ENCODE measurements at regions of chr2 and their contacts with region 1.

Region 1: DNA sequence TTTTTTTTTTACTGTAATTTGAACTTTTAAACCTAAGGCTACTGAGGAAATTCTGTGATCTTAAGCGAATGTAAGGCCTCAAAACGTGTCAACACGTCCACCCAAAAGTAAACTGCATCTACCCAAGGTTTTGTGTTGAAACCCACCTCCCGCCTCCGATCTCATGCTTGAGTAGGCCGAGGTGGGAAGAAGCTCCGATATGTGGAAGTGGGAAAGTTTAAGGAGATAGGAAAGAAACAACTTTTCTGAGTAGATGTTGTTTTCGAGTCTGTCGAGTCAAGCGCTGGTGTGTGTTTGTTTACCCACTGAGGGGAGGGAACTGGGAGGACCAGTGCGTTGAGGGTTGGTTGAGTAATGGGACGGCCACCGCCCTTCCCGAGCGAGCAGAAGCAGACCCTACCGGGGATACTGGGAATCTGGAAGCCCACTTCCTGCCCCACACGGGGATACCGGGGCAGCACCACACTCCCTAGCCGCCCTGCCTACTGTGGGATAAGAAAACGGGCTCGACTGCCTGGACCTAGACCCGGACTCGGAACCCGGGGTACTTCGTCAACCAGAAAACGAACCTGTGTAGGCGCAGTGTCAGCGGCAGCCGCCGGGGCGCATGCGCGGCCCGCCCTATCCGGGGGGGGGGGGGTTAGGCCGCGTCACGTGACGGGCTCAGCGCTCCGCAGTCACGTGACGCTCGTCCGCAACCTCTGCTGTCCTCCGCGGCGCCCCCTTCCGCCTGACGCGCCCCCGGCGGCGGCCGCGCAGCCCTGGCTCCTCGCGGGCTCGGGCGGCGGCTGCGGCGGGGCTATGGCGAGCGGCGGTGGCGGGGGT is at the start of gene RETREG2:
- DNase-seq: peak; percentile 89
- H3K4me3 ChIP-seq: peak within 1 kb of the TSS; percentile 96
- H3K27ac ChIP-seq: peak within 1 kb of the TSS; percentile 81
- H3K4me1 ChIP-seq: peaks cover 5% of the 10 kb centered on the region
- H3K27me3 ChIP-seq: no peaks in the 10 kb centered on the region
- CTCF ChIP-seq: 0 out of 2 replicates have a peak, but pooled peaks have one; percentile 31
- total RNA-seq, gene RETREG2: 53.1 and 59.0 TPM in 2 replicates

Region 2: GRCh38 chr2:218607436-218608115 is 570.2 kb before region 1 on chr2 and contains the start of gene PLCD4:
- CTCF ChIA-PET with region 1: no interaction called
- POLR2A ChIA-PET with region 1: interaction called, 12 read pairs
- intact Hi-C with region 1: no loop called
- DNase-seq: no peak
- H3K4me3 ChIP-seq: no peak within 1 kb of the TSS
- H3K27ac ChIP-seq: no peak within 1 kb of the TSS
- H3K4me1 ChIP-seq: peaks cover 9% of the 10 kb centered on the region
- H3K27me3 ChIP-seq: no peaks in the 10 kb centered on the region
- CTCF ChIP-seq: no peak
- total RNA-seq, gene PLCD4: 0.24 and 0.39 TPM in 2 replicates

Region 3: GRCh38 chr2:218959141-218959731 is 218.5 kb before region 1 on chr2 and contains the start of gene CDK5R2:
- CTCF ChIA-PET with region 1: no interaction called
- POLR2A ChIA-PET with region 1: no interaction called
- intact Hi-C with region 1: no loop called
- DNase-seq: peak; percentile 95
- H3K4me3 ChIP-seq: peak within 1 kb of the TSS; percentile 53
- H3K27ac ChIP-seq: no peak within 1 kb of the TSS
- H3K4me1 ChIP-seq: peaks cover 24% of the 10 kb centered on the region
- H3K27me3 ChIP-seq: peaks cover 29% of the 10 kb centered on the region
- CTCF ChIP-seq: no peak
- total RNA-seq, gene CDK5R2: 0.37 and 0.44 TPM in 2 replicates

Region 4: DNA sequence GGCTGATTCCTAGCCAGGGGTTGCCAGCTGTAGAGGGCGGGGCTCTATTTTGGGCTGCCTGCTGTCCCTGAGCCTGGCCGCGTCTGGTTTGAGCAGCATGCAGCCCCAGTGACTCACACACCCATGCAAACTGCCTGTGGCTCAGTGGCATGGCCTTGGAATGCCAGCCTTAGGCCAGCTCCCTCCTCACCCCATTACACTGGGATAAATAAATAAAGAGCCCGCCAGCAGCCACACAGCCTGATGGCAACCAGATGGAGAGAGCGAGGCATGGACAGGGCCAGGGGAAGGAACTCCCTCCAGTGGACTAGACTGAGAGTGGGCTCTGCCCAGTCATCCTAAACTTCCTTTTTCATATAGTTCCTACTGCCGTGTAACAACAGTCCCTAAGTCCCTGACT is 35.4 kb before region 1 on chr2:
- CTCF ChIA-PET with region 1: no interaction called
- POLR2A ChIA-PET with region 1: interaction called, 13 read pairs
- intact Hi-C with region 1: no loop called
- DNase-seq: no peak
- H3K4me3 ChIP-seq: no peak overlapping the region
- H3K27ac ChIP-seq: no peak overlapping the region
- H3K4me1 ChIP-seq: no peaks in the 10 kb centered on the region
- H3K27me3 ChIP-seq: no peaks in the 10 kb centered on the region
- CTCF ChIP-seq: no peak

Region 5: DNA sequence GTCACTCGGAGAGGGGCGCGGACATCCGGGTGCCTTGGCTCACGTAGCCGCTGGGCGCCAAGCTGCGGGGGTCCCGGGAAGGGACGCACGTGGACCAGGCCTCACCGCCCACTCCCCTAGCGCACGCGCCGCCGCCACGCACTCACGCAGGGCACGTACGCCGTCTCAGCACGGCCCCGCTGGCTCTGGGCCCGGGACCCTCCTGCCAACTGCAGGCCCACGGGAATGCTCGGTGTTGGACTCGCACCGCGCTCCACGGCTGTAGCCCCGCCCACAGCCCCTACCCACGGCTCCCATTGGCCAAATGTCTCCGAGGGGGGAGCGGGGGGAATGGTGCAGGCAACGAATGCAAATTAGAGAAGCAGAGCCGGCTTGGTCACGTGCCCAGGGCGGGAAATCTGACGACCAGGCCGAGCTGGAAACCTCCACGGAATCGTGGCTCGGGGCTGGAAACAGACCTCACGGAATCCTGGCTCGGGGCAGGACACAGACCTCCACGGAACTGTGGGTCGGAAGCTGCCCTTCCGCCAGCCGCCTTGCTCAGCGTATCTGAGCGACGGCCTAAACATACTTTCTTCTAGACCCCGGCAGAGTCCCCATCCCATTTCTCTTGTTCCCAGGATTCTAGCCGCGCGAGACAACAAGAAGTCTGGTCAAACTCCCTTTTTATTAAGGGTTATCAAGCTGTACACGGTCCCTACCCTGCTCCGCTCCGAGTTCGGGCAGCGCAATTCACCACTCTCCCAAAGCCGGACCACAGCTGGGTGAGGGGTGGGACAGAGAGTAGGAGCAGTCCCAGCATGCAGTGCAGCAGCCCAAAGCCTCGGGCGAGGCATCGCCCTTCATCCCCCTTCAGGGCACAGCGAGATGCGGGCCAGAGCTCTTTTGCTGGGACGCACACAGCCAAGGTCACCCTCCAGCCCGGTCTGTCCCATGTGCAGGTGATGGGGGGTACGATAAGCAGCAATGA is 41.3 kb after region 1 on chr2 and contains the start of gene ABCB6:
- CTCF ChIA-PET with region 1: no interaction called
- POLR2A ChIA-PET with region 1: no interaction called
- intact Hi-C with region 1: loop called (anchors 5 kb)
- DNase-seq: peak; percentile 99
- H3K4me3 ChIP-seq: peak within 1 kb of the TSS; percentile 66
- H3K27ac ChIP-seq: peak within 1 kb of the TSS; percentile 91
- H3K4me1 ChIP-seq: peaks cover 23% of the 10 kb centered on the region
- H3K27me3 ChIP-seq: no peaks in the 10 kb centered on the region
- CTCF ChIP-seq: no peak
- total RNA-seq, gene ABCB6: 87.7 and 101 TPM in 2 replicates

Region 6: GRCh38 chr2:219362524-219363164 is 184.9 kb after region 1 on chr2:
- CTCF ChIA-PET with region 1: no interaction called
- POLR2A ChIA-PET with region 1: no interaction called
- intact Hi-C with region 1: no loop called
- DNase-seq: peak; percentile 76
- H3K4me3 ChIP-seq: no peak overlapping the region
- H3K27ac ChIP-seq: no peak overlapping the region
- H3K4me1 ChIP-seq: no peaks in the 10 kb centered on the region
- H3K27me3 ChIP-seq: peaks cover 28% of the 10 kb centered on the region
- CTCF ChIP-seq: no peak